ENCODE measurements at regions of chr4 and their contacts with region 1.

Region 1: GRCh38 chr4:87848622-87849351 is 16.0 kb downstream of the MEPE start:
- DNase-seq: peak; percentile 56
- ATAC-seq: peak; percentile 93
- H3K4me3 ChIP-seq: no peak overlapping the region
- H3K27ac ChIP-seq: no peak overlapping the region
- H3K4me1 ChIP-seq: no peaks in the 10 kb centered on the region
- H3K27me3 ChIP-seq: peaks cover 6% of the 10 kb centered on the region
- CTCF ChIP-seq: peak; percentile 57
- POLR2A ChIP-seq: no peak
- RAD21 ChIP-seq: peak; percentile 61

Region 2: GRCh38 chr4:87270144-87270543 is 578.6 kb before region 1 on chr4:
- CTCF ChIA-PET with region 1: no interaction called
- POLR2A ChIA-PET with region 1: no interaction called
- dilution Hi-C with region 1: no loop called
- in situ Hi-C with region 1: no loop called
- intact Hi-C with region 1: loop called (anchors 2 kb)
- DNase-seq: peak; percentile 52
- ATAC-seq: peak; percentile 87
- H3K4me3 ChIP-seq: no peak overlapping the region
- H3K27ac ChIP-seq: no peak overlapping the region
- H3K4me1 ChIP-seq: no peaks in the 10 kb centered on the region
- H3K27me3 ChIP-seq: peaks cover 11% of the 10 kb centered on the region
- CTCF ChIP-seq: peak; percentile 64
- POLR2A ChIP-seq: no peak
- RAD21 ChIP-seq: peak; percentile 65

Region 3: GRCh38 chr4:87543835-87544461 is 304.8 kb before region 1 on chr4:
- CTCF ChIA-PET with region 1: interaction called, 3 read pairs
- POLR2A ChIA-PET with region 1: no interaction called
- dilution Hi-C with region 1: no loop called
- in situ Hi-C with region 1: loop called (anchors 10 kb)
- intact Hi-C with region 1: no loop called
- DNase-seq: peak; percentile 52
- ATAC-seq: peak; percentile 90
- H3K4me3 ChIP-seq: no peak overlapping the region
- H3K27ac ChIP-seq: no peak overlapping the region
- H3K4me1 ChIP-seq: no peaks in the 10 kb centered on the region
- H3K27me3 ChIP-seq: peaks cover 7% of the 10 kb centered on the region
- CTCF ChIP-seq: peak; percentile 50
- POLR2A ChIP-seq: no peak
- RAD21 ChIP-seq: peak; percentile 46

Region 4: GRCh38 chr4:87783781-87784180 is 65.0 kb before region 1 on chr4:
- CTCF ChIA-PET with region 1: no interaction called
- POLR2A ChIA-PET with region 1: no interaction called
- dilution Hi-C with region 1: no loop called
- in situ Hi-C with region 1: no loop called
- intact Hi-C with region 1: no loop called
- DNase-seq: no peak
- ATAC-seq: no peak
- H3K4me3 ChIP-seq: no peak overlapping the region
- H3K27ac ChIP-seq: no peak overlapping the region
- H3K4me1 ChIP-seq: no peaks in the 10 kb centered on the region
- H3K27me3 ChIP-seq: no peaks in the 10 kb centered on the region
- CTCF ChIP-seq: no peak
- POLR2A ChIP-seq: no peak
- RAD21 ChIP-seq: no peak

Region 5: DNA sequence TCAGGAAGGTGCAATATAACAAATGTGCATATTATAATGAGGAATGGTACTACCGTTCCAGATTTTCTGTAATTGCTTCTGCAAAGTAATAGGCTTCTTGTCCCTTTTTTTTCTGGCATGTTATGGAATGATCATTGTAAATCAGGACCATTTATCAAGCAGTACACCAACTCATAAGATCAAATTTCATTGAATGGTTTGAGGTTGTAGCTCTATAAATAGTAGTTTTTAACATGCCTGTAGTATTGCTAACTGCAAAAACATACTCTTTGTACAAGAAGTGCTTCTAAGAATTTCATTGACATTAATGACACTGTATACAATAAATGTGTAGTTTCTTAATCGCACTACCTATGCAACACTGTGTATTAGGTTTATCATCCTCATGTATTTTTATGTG is 36.8 kb before region 1 on chr4:
- CTCF ChIA-PET with region 1: no interaction called
- POLR2A ChIA-PET with region 1: no interaction called
- dilution Hi-C with region 1: no loop called
- in situ Hi-C with region 1: no loop called
- intact Hi-C with region 1: no loop called
- DNase-seq: peak; percentile 27
- ATAC-seq: no peak
- H3K4me3 ChIP-seq: no peak overlapping the region
- H3K27ac ChIP-seq: no peak overlapping the region
- H3K4me1 ChIP-seq: no peaks in the 10 kb centered on the region; the same call in 1 of the 2 replicates
- H3K27me3 ChIP-seq: no peaks in the 10 kb centered on the region
- CTCF ChIP-seq: no peak
- POLR2A ChIP-seq: no peak
- RAD21 ChIP-seq: no peak

Region 6: DNA sequence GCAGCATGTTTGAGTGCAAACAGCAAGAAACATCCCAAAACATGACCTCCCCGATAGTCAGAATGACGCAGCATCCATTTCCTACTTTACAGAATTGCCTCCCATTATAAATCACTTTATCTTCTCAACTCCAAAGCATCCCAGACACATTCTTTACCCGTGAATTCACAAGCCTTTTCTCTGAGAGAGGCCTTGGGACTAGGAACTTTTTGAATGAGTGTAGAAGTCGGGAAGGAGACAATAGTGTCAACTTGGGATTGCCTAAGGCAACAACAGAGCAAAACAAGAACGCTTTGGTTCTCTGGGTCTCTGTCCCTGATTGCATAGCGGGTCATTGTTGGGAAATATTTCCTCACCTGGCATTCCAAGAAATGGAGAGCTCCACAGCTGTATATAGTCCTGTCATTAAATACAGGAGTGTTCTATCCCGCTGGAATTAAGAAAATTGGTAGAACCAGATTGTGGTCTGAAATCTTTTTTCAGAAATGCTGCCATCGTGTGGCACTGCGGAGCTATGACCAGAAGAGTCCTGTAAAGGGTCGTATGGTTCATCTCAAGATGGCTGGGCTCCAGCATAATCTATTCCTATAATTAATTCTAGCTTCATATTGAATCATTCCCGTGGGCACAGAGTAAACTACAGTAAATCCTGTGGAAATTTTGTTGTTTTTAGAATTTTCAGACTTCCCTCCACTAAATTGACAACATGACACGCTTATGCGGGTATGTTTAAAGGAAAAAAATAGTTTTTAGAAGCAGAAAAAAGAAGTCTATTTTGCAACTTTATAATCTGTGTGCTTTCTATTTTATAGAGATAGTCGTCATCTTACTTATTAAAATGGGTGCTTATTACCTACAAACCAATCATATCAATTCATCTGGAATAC is 124.7 kb after region 1 on chr4:
- CTCF ChIA-PET with region 1: interaction called, 18 read pairs
- POLR2A ChIA-PET with region 1: no interaction called
- dilution Hi-C with region 1: no loop called
- in situ Hi-C with region 1: loop called (anchors 10 kb)
- intact Hi-C with region 1: loop called (anchors 1 kb)
- DNase-seq: peak; percentile 84
- ATAC-seq: peak; percentile 90
- H3K4me3 ChIP-seq: peak overlapping the region; percentile 34; the same call in 1 of the 2 replicates
- H3K27ac ChIP-seq: no peak overlapping the region
- H3K4me1 ChIP-seq: no peaks in the 10 kb centered on the region
- H3K27me3 ChIP-seq: peaks cover 5% of the 10 kb centered on the region
- CTCF ChIP-seq: peak; percentile 65
- POLR2A ChIP-seq: no peak
- RAD21 ChIP-seq: peak; percentile 45

Region 7: DNA sequence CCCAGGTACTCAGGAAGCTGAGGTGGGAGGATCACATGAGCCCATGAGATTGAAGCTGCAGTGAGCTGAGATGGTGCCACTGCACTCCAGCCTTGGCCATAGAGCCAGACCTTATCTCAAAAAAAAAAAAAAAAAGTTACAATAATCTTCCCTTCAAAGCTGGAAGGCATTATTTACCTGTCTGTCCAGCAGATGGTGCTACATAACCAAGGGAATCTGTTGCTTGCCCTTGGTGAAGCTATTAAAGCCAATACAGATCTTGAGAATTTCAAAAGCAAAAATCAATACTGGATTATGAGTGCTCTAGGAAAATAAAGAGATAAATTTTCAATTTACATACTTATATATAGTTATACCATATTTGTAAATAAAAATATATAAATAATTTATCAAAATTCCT is 184.5 kb after region 1 on chr4:
- CTCF ChIA-PET with region 1: no interaction called
- POLR2A ChIA-PET with region 1: no interaction called
- dilution Hi-C with region 1: no loop called
- in situ Hi-C with region 1: no loop called
- intact Hi-C with region 1: loop called (anchors 10 kb)
- DNase-seq: peak; percentile 72
- ATAC-seq: peak; percentile 78
- H3K4me3 ChIP-seq: no peak overlapping the region
- H3K27ac ChIP-seq: no peak overlapping the region
- H3K4me1 ChIP-seq: peaks cover 8% of the 10 kb centered on the region
- H3K27me3 ChIP-seq: no peaks in the 10 kb centered on the region
- CTCF ChIP-seq: peak; percentile 74
- POLR2A ChIP-seq: no peak
- RAD21 ChIP-seq: peak; percentile 80

Measured in IMR-90 (cell line).